Heart right ventricle (tissue), 16 donors: ENCODE measurements at regions of chr17 and their contacts with region 1.

Region 1: DNA sequence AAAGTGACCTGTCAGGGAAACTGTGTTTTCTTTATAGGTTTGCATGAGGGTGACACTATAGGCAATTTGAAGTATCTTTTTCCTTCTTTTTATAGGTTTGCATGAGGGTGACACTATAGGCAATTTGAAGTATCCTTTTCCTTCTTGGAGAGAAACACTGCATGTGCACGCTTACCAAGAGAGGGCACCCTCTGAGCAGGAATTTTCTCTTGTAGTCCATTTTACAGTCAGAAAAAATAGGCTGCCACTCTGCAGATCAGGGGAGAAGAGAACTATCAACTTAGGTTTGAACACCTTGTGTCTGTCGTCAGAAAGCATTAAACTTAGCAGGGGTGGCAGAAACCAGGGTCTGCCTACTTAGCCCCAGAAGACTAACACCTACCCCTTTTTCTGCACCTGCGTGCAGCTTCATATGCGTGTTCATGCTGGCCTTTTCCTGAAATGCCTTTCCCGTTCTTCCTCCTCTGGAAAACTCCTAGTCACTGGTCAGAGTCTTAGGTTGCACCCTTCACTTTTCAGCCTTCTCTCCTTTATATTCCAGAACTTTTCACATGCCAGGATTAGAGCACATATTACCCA is 16.4 kb upstream of the SMIM36 start:
- DNase-seq: peak in 1 of 2 donors; percentile 25
- ATAC-seq: peak in 7 of 8 donors; percentile 54 to 89 (median 83)
- H3K4me3 ChIP-seq: no peak overlapping the region
- H3K27ac ChIP-seq: no peak overlapping the region
- H3K4me1 ChIP-seq: peaks cover 0 to 6% (median 0%) of the 10 kb centered on the region in 9 donors
- H3K27me3 ChIP-seq: peaks cover 0 to 9% (median 0%) of the 10 kb centered on the region in 7 donors
- CTCF ChIP-seq: peak; percentile 14 to 71 (median 60)

Region 2: DNA sequence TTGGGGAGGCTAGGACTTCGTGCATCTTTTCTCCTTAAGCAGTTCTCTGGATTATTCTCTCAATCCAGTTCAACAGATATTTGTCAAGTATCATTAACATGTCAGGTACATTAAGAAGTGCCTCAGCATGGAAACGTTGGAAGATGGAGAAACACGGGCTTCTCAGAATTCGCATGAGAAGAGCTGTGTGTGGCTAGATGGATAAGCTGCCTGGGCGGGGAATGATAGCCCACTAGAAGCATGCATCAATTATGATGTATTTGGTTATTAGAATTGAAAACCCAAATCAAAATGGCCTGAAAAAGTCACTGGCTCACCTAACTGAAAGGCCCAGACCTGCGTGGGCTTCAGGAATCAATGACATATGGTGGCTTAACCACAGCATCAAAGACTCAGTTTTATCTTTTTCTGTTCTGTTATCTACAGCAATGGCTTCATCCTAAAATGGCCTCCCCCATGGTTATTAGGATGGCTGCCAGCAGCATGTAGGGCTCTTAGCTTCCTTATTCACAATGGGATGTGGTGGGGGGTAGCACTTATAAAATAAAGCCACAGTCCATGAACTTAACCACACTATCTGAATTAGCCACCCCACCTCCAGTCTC is 149.9 kb before region 1 on chr17:
- intact Hi-C with region 1: no loop called
- DNase-seq: no peak
- ATAC-seq: no peak
- H3K4me3 ChIP-seq: no peak overlapping the region
- H3K27ac ChIP-seq: no peak overlapping the region
- H3K4me1 ChIP-seq: no peaks in the 10 kb centered on the region
- H3K27me3 ChIP-seq: no peaks in the 10 kb centered on the region
- CTCF ChIP-seq: no peak

Region 3: DNA sequence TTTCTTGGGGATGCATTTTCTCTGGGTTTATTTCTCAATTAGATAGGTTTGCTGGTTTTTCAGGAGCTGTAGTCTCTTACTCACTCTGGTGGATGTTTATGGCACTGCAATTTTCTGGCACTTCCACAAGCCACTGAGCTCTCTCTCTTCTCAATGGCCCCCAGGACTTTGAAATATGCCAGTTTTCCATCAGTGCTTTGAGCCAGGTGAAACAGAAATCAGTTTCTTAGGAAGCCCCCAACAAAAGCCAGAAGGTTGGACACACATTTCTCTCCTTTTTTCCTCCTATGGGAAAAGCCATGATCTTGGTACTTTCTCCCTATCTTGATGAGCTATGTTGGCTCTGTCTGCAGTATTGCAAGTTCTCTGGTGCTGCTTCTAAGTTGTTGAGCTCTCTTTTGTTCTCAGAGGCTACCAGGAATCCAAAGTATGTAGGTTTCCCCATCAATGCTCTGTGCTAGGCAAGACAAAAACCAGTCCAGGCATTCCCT is 74.3 kb after region 1 on chr17:
- intact Hi-C with region 1: loop called in 4 of 10 experiments (anchors 1 to 10 kb)
- DNase-seq: no peak
- ATAC-seq: no peak
- H3K4me3 ChIP-seq: no peak overlapping the region
- H3K27ac ChIP-seq: no peak overlapping the region
- H3K4me1 ChIP-seq: no peaks in the 10 kb centered on the region
- H3K27me3 ChIP-seq: peaks cover 0 to 8% (median 0%) of the 10 kb centered on the region in 7 donors
- CTCF ChIP-seq: peak in 8 of 9 donors; percentile 14 to 71 (median 50)

Region 4: GRCh38 chr17:55641676-55642081 is 114.0 kb after region 1 on chr17:
- intact Hi-C with region 1: loop called in 8 of 10 experiments (anchors 2 to 10 kb)
- DNase-seq: peak; percentile 48 to 75
- ATAC-seq: peak in 7 of 8 donors; percentile 58 to 88 (median 80)
- H3K4me3 ChIP-seq: no peak overlapping the region
- H3K27ac ChIP-seq: no peak overlapping the region
- H3K4me1 ChIP-seq: peaks cover 0 to 12% (median 0%) of the 10 kb centered on the region in 9 donors
- H3K27me3 ChIP-seq: peaks cover 0 to 79% (median 10%) of the 10 kb centered on the region in 7 donors
- CTCF ChIP-seq: peak; percentile 35 to 76 (median 65)

Region 5: GRCh38 chr17:55717898-55718735 is 190.5 kb after region 1 on chr17:
- intact Hi-C with region 1: loop called (anchors 1 to 10 kb)
- DNase-seq: peak; percentile 51 to 81
- ATAC-seq: peak in 6 of 8 donors; percentile 25 to 57 (median 36)
- H3K4me3 ChIP-seq: no peak overlapping the region
- H3K27ac ChIP-seq: no peak overlapping the region
- H3K4me1 ChIP-seq: peaks cover 0 to 15% (median 4%) of the 10 kb centered on the region in 9 donors
- H3K27me3 ChIP-seq: peaks cover 0 to 6% (median 0%) of the 10 kb centered on the region in 7 donors
- CTCF ChIP-seq: peak; percentile 63 to 89 (median 78)

Region 6: DNA sequence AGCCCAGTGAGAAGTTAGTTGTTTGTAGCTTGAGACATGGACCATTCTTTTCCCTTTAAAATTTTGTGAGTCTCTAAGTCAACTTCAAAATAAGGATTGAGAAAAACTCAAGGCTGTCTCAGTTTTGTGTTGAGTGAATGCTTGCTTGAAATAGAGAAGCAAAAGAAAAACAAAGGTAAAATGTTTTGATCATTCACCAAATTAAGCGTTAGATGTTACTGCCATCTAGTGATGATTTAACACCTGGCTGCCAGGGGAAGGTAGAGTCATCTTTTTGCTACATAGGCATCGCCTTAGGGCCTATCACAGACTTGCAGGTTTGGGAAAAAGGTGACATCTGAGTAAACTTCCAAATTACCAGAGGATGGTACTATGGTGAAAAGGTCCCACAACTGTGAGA is 297.6 kb after region 1 on chr17:
- intact Hi-C with region 1: loop called in 7 of 10 experiments (anchors 1 to 5 kb)
- DNase-seq: no peak
- ATAC-seq: no peak
- H3K4me3 ChIP-seq: no peak overlapping the region
- H3K27ac ChIP-seq: no peak overlapping the region
- H3K4me1 ChIP-seq: peaks cover 0 to 3% (median 0%) of the 10 kb centered on the region in 9 donors
- H3K27me3 ChIP-seq: no peaks in the 10 kb centered on the region
- CTCF ChIP-seq: peak in 7 of 9 donors; percentile 27 to 55 (median 45)